ENCODE measurements at regions of chr6 and their contacts with region 1.

Region 1: GRCh38 chr6:7541175-7542064 is at the start of gene DSP:
- DNase-seq: peak; percentile 85
- ATAC-seq: peak; percentile 81
- total RNA-seq, gene DSP: 305 TPM

Region 2: DNA sequence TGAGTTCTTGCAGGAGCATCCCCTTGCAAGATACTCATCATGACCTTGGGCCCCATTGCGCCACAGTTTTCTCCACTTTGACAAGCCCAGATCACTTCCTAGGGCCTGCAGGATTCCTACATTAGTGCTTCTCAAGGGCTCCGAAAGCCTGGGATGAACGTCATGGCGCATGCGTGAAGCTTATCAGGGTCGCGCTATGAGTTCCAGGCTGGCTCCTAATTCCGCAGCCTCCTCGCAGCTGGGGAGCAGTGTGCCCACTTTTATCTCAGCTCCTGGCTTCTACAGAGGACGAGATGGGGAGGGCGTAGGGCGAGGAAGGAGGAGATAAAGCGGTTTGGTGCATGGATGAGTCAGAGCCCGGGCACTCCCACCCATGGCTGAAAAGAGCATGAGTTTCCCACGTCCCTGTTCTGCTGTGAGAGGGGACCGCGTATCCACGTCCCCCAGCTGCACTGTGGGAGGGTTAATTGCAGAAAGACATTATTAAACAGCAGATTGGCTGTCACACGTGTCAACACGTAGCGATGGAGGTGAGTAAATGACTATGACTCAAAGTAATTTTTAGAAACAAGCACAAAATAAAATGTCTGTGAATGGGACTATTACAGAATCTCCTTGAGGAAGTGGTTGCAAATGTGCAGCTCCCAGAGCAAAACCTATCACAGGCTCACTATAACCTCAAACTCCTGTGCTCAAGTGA is 72.9 kb before region 1 on chr6:
- intact Hi-C with region 1: loop called (anchors 2 kb)
- DNase-seq: no peak
- ATAC-seq: peak; percentile 86

Region 3: GRCh38 chr6:7561153-7561964 is 19.9 kb after region 1 on chr6:
- intact Hi-C with region 1: loop called (anchors 2 kb)
- DNase-seq: peak; percentile 64
- ATAC-seq: peak; percentile 90